CD8-positive, alpha-beta T cell (primary cell): ENCODE measurements at regions of chr19 and their contacts with region 1.

Region 1: GRCh38 chr19:12777217-12778016 is 2.1 kb upstream of the HOOK2 start:
- DNase-seq: peak; percentile 68 to 89 (median 80)
- ATAC-seq: peak; percentile 4
- H3K4me3 ChIP-seq: peak overlapping the region; percentile 63 to 86
- H3K4me3 Mint-ChIP-seq: peak overlapping the region; percentile 82
- H3K27ac ChIP-seq: peak overlapping the region; percentile 57 to 87
- H3K27ac Mint-ChIP-seq: peak overlapping the region; percentile 85
- H3K4me1 ChIP-seq: peaks cover 38% of the 10 kb centered on the region
- H3K4me1 Mint-ChIP-seq: peaks cover 36% of the 10 kb centered on the region
- H3K27me3 ChIP-seq: no peaks in the 10 kb centered on the region
- H3K27me3 Mint-ChIP-seq: no peaks in the 10 kb centered on the region
- CTCF ChIP-seq: peak; percentile 97

Region 2: GRCh38 chr19:12628040-12629022 is 149.1 kb before region 1 on chr19:
- CTCF ChIA-PET with region 1: no interaction called
- POLR2A ChIA-PET with region 1: no interaction called
- intact Hi-C with region 1: no loop called
- DNase-seq: no peak
- ATAC-seq: no peak
- H3K4me3 ChIP-seq: no peak overlapping the region
- H3K4me3 Mint-ChIP-seq: no peak overlapping the region
- H3K27ac ChIP-seq: no peak overlapping the region
- H3K27ac Mint-ChIP-seq: no peak overlapping the region
- H3K4me1 ChIP-seq: no peaks in the 10 kb centered on the region
- H3K4me1 Mint-ChIP-seq: peaks cover 6% of the 10 kb centered on the region
- H3K27me3 ChIP-seq: no peaks in the 10 kb centered on the region
- H3K27me3 Mint-ChIP-seq: no peaks in the 10 kb centered on the region
- CTCF ChIP-seq: no peak

Region 3: GRCh38 chr19:12722566-12723380 is 54.6 kb before region 1 on chr19:
- CTCF ChIA-PET with region 1: interaction called, 4 read pairs
- POLR2A ChIA-PET with region 1: no interaction called
- intact Hi-C with region 1: loop called in 1 of 2 experiments (anchors 2 kb)
- DNase-seq: peak; percentile 81 to 99 (median 92)
- ATAC-seq: peak; percentile 88
- H3K4me3 ChIP-seq: peak overlapping the region; percentile 78 to 85
- H3K4me3 Mint-ChIP-seq: peak overlapping the region; percentile 93
- H3K27ac ChIP-seq: peak overlapping the region; percentile 55 to 80
- H3K27ac Mint-ChIP-seq: peak overlapping the region; percentile 89
- H3K4me1 ChIP-seq: peaks cover 28% of the 10 kb centered on the region
- H3K4me1 Mint-ChIP-seq: peaks cover 37% of the 10 kb centered on the region
- H3K27me3 ChIP-seq: no peaks in the 10 kb centered on the region
- H3K27me3 Mint-ChIP-seq: no peaks in the 10 kb centered on the region
- CTCF ChIP-seq: no peak

Region 4: GRCh38 chr19:12757544-12758274 is 19.7 kb before region 1 on chr19:
- CTCF ChIA-PET with region 1: interaction called, 201 read pairs
- POLR2A ChIA-PET with region 1: no interaction called
- intact Hi-C with region 1: no loop called
- DNase-seq: peak; percentile 32 to 74 (median 49)
- ATAC-seq: peak; percentile 78
- H3K4me3 ChIP-seq: no peak overlapping the region
- H3K4me3 Mint-ChIP-seq: peak overlapping the region; percentile 18
- H3K27ac ChIP-seq: no peak overlapping the region
- H3K27ac Mint-ChIP-seq: no peak overlapping the region
- H3K4me1 ChIP-seq: peaks cover 7% of the 10 kb centered on the region
- H3K4me1 Mint-ChIP-seq: peaks cover 6% of the 10 kb centered on the region
- H3K27me3 ChIP-seq: peaks cover 3 to 4% of the 10 kb centered on the region in 2 experiments
- H3K27me3 Mint-ChIP-seq: peaks cover 16% of the 10 kb centered on the region
- CTCF ChIP-seq: peak; percentile 93

Region 5: GRCh38 chr19:12766051-12766521 is 11.3 kb before region 1 on chr19:
- CTCF ChIA-PET with region 1: interaction called, 201 read pairs
- POLR2A ChIA-PET with region 1: interaction called, 3 read pairs
- intact Hi-C with region 1: loop called in 1 of 2 experiments (anchors 1 kb)
- DNase-seq: peak in 8 of 9 experiments; percentile 54 to 90 (median 78)
- ATAC-seq: peak; percentile 61
- H3K4me3 ChIP-seq: no peak overlapping the region
- H3K4me3 Mint-ChIP-seq: no peak overlapping the region
- H3K27ac ChIP-seq: no peak overlapping the region
- H3K27ac Mint-ChIP-seq: no peak overlapping the region
- H3K4me1 ChIP-seq: no peaks in the 10 kb centered on the region
- H3K4me1 Mint-ChIP-seq: peaks cover 3% of the 10 kb centered on the region
- H3K27me3 ChIP-seq: no peaks in the 10 kb centered on the region
- H3K27me3 Mint-ChIP-seq: no peaks in the 10 kb centered on the region
- CTCF ChIP-seq: peak; percentile 56

Region 6: GRCh38 chr19:12796146-12797071 is 19.0 kb after region 1 on chr19:
- CTCF ChIA-PET with region 1: interaction called, 396 read pairs
- POLR2A ChIA-PET with region 1: interaction called, 215 read pairs
- intact Hi-C with region 1: loop called (anchors 1 kb)
- DNase-seq: peak; percentile 46 to 88 (median 78)
- ATAC-seq: peak; percentile 6
- H3K4me3 ChIP-seq: peak overlapping the region; percentile 5 to 25
- H3K4me3 Mint-ChIP-seq: peak overlapping the region; percentile 70
- H3K27ac ChIP-seq: peak overlapping the region in 1 of 2 experiments; percentile 36
- H3K27ac Mint-ChIP-seq: peak overlapping the region; percentile 89
- H3K4me1 ChIP-seq: peaks cover 36% of the 10 kb centered on the region
- H3K4me1 Mint-ChIP-seq: peaks cover 38% of the 10 kb centered on the region
- H3K27me3 ChIP-seq: no peaks in the 10 kb centered on the region
- H3K27me3 Mint-ChIP-seq: no peaks in the 10 kb centered on the region
- CTCF ChIP-seq: peak; percentile 86

Region 7: GRCh38 chr19:12806239-12807081 is 29.0 kb after region 1 on chr19 and contains the start of gene RNASEH2A:
- CTCF ChIA-PET with region 1: interaction called, 11 read pairs
- POLR2A ChIA-PET with region 1: interaction called, 9 read pairs
- intact Hi-C with region 1: loop called in 1 of 2 experiments (anchors 1 kb)
- DNase-seq: peak; percentile 66 to 93 (median 85)
- ATAC-seq: peak; percentile 92
- H3K4me3 ChIP-seq: peak within 1 kb of the TSS; percentile 60 to 68
- H3K4me3 Mint-ChIP-seq: peak within 1 kb of the TSS; percentile 92
- H3K27ac ChIP-seq: peak within 1 kb of the TSS; percentile 54 to 63
- H3K27ac Mint-ChIP-seq: peak within 1 kb of the TSS; percentile 78
- H3K4me1 ChIP-seq: peaks cover 18% of the 10 kb centered on the region
- H3K4me1 Mint-ChIP-seq: peaks cover 26% of the 10 kb centered on the region
- H3K27me3 ChIP-seq: no peaks in the 10 kb centered on the region
- H3K27me3 Mint-ChIP-seq: no peaks in the 10 kb centered on the region
- CTCF ChIP-seq: no peak
- total RNA-seq, gene RNASEH2A: 1.3 to 2.2 TPM

Region 8: DNA sequence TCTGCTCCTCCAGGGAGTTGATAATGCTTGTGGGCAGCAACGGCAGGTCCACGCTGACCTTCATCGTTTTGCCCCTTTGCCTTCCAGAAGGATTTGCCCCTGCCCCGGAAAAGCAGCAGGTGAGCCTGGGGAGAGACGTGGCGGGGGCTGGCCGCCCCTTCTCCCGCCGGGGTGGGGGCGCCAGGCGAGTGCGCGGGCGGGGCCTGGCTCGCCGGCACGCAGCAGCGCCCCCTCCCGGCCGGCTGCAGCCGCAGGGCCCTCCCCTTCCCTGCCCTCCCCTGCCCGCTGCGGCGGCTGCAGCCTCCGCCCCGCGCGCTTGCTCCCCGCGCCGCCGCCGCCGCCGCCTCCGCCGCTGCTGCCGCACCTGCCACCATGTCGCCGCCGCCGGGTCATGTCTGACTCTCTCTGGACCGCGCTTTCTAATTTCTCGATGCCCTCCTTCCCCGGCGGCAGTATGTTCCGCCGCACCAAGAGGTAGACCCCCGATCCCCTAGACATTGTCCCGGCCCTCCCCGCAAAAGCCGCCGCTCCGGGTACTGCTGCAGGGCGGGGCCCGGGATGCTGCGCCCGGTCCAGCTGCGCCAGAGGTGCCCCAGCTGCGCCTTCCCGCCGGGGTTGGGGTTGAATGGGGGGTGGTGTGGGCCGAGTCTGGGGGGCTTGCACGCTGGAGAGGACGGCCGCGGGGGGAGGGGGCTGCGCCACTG is 60.9 kb after region 1 on chr19 and contains the start of gene MAST1:
- CTCF ChIA-PET with region 1: no interaction called
- POLR2A ChIA-PET with region 1: no interaction called
- intact Hi-C with region 1: no loop called
- DNase-seq: peak in 7 of 9 experiments; percentile 19 to 77 (median 55)
- ATAC-seq: peak; percentile 64
- H3K4me3 ChIP-seq: peak within 1 kb of the TSS in 1 of 2 experiments; percentile 34
- H3K4me3 Mint-ChIP-seq: peak within 1 kb of the TSS; percentile 65
- H3K27ac ChIP-seq: no peak within 1 kb of the TSS
- H3K27ac Mint-ChIP-seq: no peak within 1 kb of the TSS
- H3K4me1 ChIP-seq: peaks cover 26% of the 10 kb centered on the region
- H3K4me1 Mint-ChIP-seq: peaks cover 35% of the 10 kb centered on the region
- H3K27me3 ChIP-seq: peaks cover 57 to 63% of the 10 kb centered on the region in 2 experiments
- H3K27me3 Mint-ChIP-seq: peaks cover 74% of the 10 kb centered on the region
- CTCF ChIP-seq: peak; percentile 34
- total RNA-seq, gene MAST1: 0.64 to 1.1 TPM